ENCODE measurements at regions of chr6 and their contacts with region 1.

Region 1: DNA sequence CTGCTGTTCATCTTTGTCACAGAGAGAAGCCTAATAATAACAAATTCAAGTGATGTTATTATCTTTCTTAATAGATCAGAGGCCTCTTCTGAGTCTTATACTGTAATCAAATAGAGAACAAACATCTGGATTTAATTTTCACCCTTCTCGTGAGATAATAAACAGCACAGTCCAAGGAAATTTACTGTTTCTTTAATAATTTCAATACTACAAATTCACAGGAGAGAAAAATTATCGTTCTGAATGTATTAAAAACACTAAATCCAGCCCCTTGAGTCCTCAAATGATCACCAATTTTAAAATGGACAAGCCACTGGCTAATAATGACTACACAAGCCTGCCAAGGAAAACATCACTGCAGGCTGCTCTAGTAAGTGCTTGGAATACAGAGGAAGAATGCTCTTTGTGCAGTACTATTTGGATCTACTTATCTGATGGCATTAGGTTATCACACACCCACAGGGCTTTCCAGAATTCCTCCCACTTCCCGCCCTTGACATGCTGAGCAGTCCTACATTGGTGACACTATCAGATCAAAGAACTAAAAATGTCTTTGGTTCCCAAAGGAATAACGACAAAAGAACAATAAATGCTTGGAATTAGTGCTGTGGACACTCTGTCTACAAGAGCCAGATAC is 38.1 kb downstream of the SYNE1 start:
- DNase-seq: peak; percentile 85
- H3K4me3 ChIP-seq: no peak overlapping the region
- H3K27ac ChIP-seq: no peak overlapping the region
- H3K4me1 ChIP-seq: no peaks in the 10 kb centered on the region
- H3K27me3 ChIP-seq: peaks cover 0 to 3% of the 10 kb centered on the region in 2 experiments
- CTCF ChIP-seq: no peak
- POLR2A ChIP-seq: peak; percentile 37

Region 2: DNA sequence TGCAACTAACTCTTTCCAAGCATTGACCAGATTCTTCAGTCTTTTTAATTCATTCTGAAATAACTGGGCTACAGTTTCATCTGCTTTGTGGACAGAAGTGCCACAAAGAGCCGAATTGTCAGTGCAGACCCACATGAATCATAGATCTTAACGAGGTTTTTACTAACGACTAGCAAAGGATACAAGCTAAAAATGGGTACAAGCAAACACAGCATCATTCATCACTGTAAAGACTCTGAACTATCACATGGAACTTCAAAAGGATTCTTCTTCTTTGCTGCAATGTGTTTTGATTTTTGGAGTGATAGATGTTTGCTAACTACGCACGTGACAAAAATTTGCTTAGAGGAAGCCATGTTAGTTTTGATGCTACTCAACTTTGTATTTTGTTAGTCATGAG is 564.4 kb before region 1 on chr6:
- CTCF ChIA-PET with region 1: no interaction called
- POLR2A ChIA-PET with region 1: no interaction called
- dilution Hi-C with region 1: no loop called
- intact Hi-C with region 1: no loop called
- DNase-seq: no peak
- H3K4me3 ChIP-seq: no peak overlapping the region
- H3K27ac ChIP-seq: no peak overlapping the region
- H3K4me1 ChIP-seq: no peaks in the 10 kb centered on the region
- H3K27me3 ChIP-seq: no peaks in the 10 kb centered on the region
- CTCF ChIP-seq: no peak
- POLR2A ChIP-seq: no peak

Region 3: GRCh38 chr6:152572395-152573061 is 26.5 kb before region 1 on chr6:
- CTCF ChIA-PET with region 1: interaction called, 9 read pairs
- POLR2A ChIA-PET with region 1: no interaction called
- dilution Hi-C with region 1: no loop called
- intact Hi-C with region 1: loop called (anchors 2 kb)
- DNase-seq: peak; percentile 78
- H3K4me3 ChIP-seq: no peak overlapping the region
- H3K27ac ChIP-seq: no peak overlapping the region
- H3K4me1 ChIP-seq: peaks cover 19% of the 10 kb centered on the region
- H3K27me3 ChIP-seq: peaks cover 0 to 12% of the 10 kb centered on the region in 2 experiments
- CTCF ChIP-seq: no peak
- POLR2A ChIP-seq: no peak

Region 4: GRCh38 chr6:153108315-153108714 is 509.3 kb after region 1 on chr6:
- CTCF ChIA-PET with region 1: no interaction called
- POLR2A ChIA-PET with region 1: no interaction called
- dilution Hi-C with region 1: no loop called
- intact Hi-C with region 1: no loop called
- DNase-seq: peak; percentile 44
- H3K4me3 ChIP-seq: no peak overlapping the region
- H3K27ac ChIP-seq: no peak overlapping the region
- H3K4me1 ChIP-seq: no peaks in the 10 kb centered on the region
- H3K27me3 ChIP-seq: no peaks in the 10 kb centered on the region
- CTCF ChIP-seq: peak; percentile 38 to 43
- POLR2A ChIP-seq: no peak

Measured in endothelial cell of umbilical vein (primary cell).